Vagina (tissue), 2 donors: ENCODE measurements at regions of chr1 and their contacts with region 1.

Region 1: DNA sequence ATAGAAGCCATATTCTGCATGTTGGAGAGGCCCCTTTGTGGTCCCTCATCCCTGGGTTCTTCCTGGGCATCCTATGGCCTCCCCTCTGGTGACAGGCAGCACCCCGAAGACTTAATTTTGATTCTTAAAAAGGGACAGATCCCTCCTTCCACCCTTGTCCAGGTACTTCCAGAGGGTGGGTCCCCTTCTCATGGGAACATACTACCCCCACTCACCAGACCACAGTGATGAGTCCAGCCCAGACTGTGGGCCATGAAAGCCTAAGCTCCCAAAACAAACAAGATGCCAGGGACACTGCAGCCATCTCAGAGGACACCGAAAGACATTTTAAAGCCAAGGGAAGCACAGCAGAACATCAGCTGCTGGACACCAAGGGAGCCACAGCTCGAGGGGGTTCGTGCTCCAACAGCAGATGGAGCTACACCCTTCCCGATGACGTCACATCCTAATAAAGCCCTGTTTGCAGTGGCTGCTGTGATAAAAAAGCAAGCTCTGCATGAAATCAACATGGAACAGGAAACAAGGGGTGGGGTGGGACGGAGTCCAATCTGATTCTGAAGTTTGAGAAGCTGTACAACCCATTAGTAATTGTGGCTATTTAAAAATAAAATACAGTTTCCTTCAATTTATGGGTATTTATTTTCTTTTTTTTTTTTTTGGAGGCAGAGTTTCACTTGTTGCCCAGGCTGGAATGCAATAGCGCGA is 32.4 kb downstream of the GNB1 start:
- DNase-seq: peak in 1 of 2 donors; percentile 91
- H3K4me3 ChIP-seq: peak overlapping the region in 1 of 2 donors; percentile 13
- H3K27ac ChIP-seq: peak overlapping the region; percentile 82
- H3K4me1 ChIP-seq: peaks cover 83% of the 10 kb centered on the region
- H3K27me3 ChIP-seq: no peaks in the 10 kb centered on the region
- CTCF ChIP-seq: peak in 1 of 3 experiments; percentile 13
- POLR2A ChIP-seq: no peak

Region 2: DNA sequence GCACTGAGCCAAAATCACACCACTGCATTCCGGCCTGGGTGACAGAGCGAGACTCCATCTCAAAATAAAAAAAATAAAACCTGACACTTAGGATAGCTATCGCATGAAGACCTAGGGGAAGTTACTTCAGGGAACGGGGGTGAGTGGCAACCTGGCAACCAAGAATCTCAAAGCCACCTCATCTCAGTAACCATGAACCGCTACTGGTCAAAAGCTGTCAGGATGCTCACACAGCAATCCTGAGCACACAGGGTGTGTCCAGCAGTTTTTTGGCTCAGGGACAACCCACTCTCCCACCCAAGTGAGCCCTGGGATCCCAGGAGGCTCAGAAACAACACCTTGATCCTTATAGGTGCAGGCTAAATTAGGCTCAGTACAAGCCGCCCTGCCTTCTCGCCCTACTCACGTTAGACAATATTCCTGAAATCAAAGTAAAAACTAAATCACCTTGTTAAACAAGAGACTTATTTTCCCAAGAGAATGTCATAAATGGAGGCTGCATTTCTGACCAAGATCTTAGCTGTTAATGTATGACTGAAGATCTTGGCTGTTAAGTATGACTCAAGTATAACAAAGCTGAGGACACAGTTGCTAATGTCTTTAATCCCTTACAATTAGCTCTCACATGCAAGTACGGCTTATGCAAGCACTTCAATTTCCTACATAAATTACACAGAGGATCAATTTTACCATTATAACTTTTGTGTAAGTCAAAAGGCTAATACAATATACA is 32.0 kb before region 1 on chr1:
- intact Hi-C with region 1: no loop called
- DNase-seq: no peak
- H3K4me3 ChIP-seq: no peak overlapping the region
- H3K27ac ChIP-seq: no peak overlapping the region
- H3K4me1 ChIP-seq: peaks cover 16% of the 10 kb centered on the region
- H3K27me3 ChIP-seq: no peaks in the 10 kb centered on the region
- CTCF ChIP-seq: no peak
- POLR2A ChIP-seq: no peak

Region 3: GRCh38 chr1:1890506-1891348 is 32.2 kb after region 1 on chr1 and contains the start of gene GNB1:
- intact Hi-C with region 1: loop called (anchors 2 kb)
- DNase-seq: no peak
- H3K4me3 ChIP-seq: peak within 1 kb of the TSS; percentile 86 to 92
- H3K27ac ChIP-seq: peak within 1 kb of the TSS; percentile 94
- H3K4me1 ChIP-seq: peaks cover 79% of the 10 kb centered on the region
- H3K27me3 ChIP-seq: no peaks in the 10 kb centered on the region
- CTCF ChIP-seq: no peak
- POLR2A ChIP-seq: peak in 1 of 2 donors; percentile 64
- total RNA-seq, gene GNB1: 159 TPM